K562 (cell line): ENCODE measurements at regions of chr3 and their contacts with region 1.

Region 1: DNA sequence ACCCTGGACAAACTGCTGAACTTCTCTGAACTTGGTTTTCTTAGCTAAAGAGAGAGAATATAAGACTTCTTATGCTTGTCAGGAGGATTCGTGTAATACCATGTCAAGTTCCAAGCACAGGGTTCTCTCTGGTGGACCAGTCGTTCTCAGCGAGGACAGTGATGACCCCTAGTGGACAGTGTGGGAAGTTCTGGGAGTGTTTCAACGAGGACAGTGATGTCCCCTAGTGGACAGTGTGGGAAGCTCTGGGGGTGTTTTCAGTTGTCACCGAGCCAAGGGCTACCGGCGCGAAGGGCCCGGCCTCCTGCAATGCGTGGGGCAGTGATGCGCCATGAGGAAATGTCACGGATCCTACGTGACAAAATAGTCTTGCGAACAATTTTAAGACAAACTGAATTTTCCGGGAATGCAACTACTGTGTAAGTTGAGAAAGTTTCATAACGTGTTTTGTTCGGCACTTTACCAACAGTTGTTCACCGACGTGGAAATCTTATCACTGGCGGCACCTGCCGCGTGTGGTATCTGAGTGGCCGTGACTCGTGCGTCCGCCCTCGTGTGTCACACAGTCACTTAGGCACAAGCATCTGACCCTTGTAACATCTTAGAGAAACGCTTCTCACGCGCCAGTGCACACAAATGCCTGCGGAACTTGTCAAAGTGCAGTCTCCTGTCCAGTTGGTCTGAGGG is 39.3 kb upstream of the MUC4 start:
- DNase-seq: peak; percentile 85 to 93 (median 88)
- ATAC-seq: peak; percentile 86
- H3K4me3 ChIP-seq: no peak overlapping the region
- H3K27ac ChIP-seq: no peak overlapping the region
- H3K4me1 ChIP-seq: peaks cover 27 to 50% of the 10 kb centered on the region in 2 experiments
- H3K27me3 ChIP-seq: no peaks in the 10 kb centered on the region
- CTCF ChIP-seq: peak; percentile 100
- EP300 ChIP-seq: peak; percentile 48
- POLR2A ChIP-seq: no peak
- RAD21 ChIP-seq: peak; percentile 99 to 100

Region 2: GRCh38 chr3:195558602-195559001 is 292.4 kb before region 1 on chr3:
- CTCF ChIA-PET with region 1: interaction called, 5 read pairs
- POLR2A ChIA-PET with region 1: no interaction called
- in situ Hi-C with region 1: no loop called
- intact Hi-C with region 1: loop called (anchors 1 kb)
- DNase-seq: peak; percentile 41 to 67 (median 54)
- ATAC-seq: peak; percentile 79
- H3K4me3 ChIP-seq: no peak overlapping the region
- H3K27ac ChIP-seq: no peak overlapping the region
- H3K4me1 ChIP-seq: peaks cover 0 to 3% of the 10 kb centered on the region in 2 experiments; a peak in 1 of 5 replicates
- H3K27me3 ChIP-seq: peaks cover 4 to 7% of the 10 kb centered on the region in 2 experiments; a peak in 4 of 5 replicates
- CTCF ChIP-seq: peak; percentile 63 to 86 (median 69)
- EP300 ChIP-seq: no peak
- POLR2A ChIP-seq: no peak
- RAD21 ChIP-seq: peak; percentile 78 to 89

Region 3: GRCh38 chr3:195748661-195749060 is 102.3 kb before region 1 on chr3:
- CTCF ChIA-PET with region 1: interaction called, 4 read pairs
- POLR2A ChIA-PET with region 1: no interaction called
- in situ Hi-C with region 1: no loop called
- intact Hi-C with region 1: loop called (anchors 10 kb)
- DNase-seq: no peak
- ATAC-seq: peak; percentile 5; the same call in 2 of the 3 replicates
- H3K4me3 ChIP-seq: no peak overlapping the region
- H3K27ac ChIP-seq: no peak overlapping the region
- H3K4me1 ChIP-seq: peaks cover 0 to 28% of the 10 kb centered on the region in 2 experiments; a peak in 3 of 5 replicates
- H3K27me3 ChIP-seq: peaks cover 12 to 43% of the 10 kb centered on the region in 2 experiments
- CTCF ChIP-seq: no peak
- EP300 ChIP-seq: no peak
- POLR2A ChIP-seq: no peak
- RAD21 ChIP-seq: no peak

Region 4: DNA sequence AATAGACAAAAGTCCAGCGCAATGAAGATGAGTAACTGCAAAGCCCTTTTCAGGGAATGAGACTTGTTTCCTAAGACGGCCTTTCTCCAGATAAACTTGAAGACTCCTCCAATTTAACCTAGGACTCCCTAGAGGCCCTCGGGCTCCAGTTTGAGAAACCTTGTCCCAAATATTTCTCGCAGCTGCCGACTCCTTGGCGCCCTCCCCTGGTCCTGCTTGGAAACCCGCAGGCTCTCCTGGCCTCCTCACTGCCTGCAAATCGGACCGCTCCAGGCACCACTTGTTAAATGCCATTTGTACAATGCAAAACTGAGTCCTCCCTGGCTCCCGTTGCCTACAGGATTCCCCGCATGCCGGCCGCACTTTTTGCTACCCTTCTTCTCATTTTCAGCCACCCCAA is 76.1 kb before region 1 on chr3:
- CTCF ChIA-PET with region 1: interaction called, 4 read pairs
- POLR2A ChIA-PET with region 1: no interaction called
- in situ Hi-C with region 1: no loop called
- intact Hi-C with region 1: loop called (anchors 2 kb)
- DNase-seq: peak; percentile 66 to 71 (median 66)
- ATAC-seq: peak; percentile 97
- H3K4me3 ChIP-seq: no peak overlapping the region
- H3K27ac ChIP-seq: no peak overlapping the region
- H3K4me1 ChIP-seq: no peaks in the 10 kb centered on the region; a peak in 1 of 5 replicates
- H3K27me3 ChIP-seq: peaks cover 0 to 24% of the 10 kb centered on the region in 2 experiments; a peak in 2 of 5 replicates
- CTCF ChIP-seq: peak; percentile 78 to 87 (median 83)
- EP300 ChIP-seq: no peak
- POLR2A ChIP-seq: no peak
- RAD21 ChIP-seq: peak; percentile 56 to 69

Region 5: DNA sequence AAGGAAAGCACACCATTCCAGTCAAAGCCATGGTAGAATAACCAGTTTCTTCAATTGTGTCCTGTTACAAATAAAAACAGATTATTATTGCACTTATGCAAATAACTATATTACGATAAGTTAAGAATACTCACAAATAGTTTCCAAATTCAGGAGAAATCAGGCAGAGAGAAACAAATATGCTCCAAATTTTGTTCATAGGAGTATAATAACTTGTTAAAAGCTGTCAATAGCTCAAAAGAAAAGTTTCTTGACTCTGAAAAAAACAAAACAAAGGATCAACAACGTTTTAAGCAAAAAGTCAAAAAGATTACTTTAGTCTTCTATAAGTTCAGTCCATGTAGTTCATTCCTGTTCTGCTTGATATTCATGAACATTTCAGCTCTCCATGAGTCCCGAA is 1764.4 kb after region 1 on chr3:
- CTCF ChIA-PET with region 1: no interaction called
- POLR2A ChIA-PET with region 1: no interaction called
- in situ Hi-C with region 1: loop called (anchors 10 kb)
- intact Hi-C with region 1: no loop called
- DNase-seq: no peak
- ATAC-seq: no peak
- H3K4me3 ChIP-seq: no peak overlapping the region
- H3K27ac ChIP-seq: no peak overlapping the region
- H3K4me1 ChIP-seq: peaks cover 0 to 4% of the 10 kb centered on the region in 2 experiments; a peak in 2 of 5 replicates
- H3K27me3 ChIP-seq: no peaks in the 10 kb centered on the region
- CTCF ChIP-seq: no peak
- EP300 ChIP-seq: no peak
- POLR2A ChIP-seq: no peak
- RAD21 ChIP-seq: no peak